ENCODE measurements at regions of chr13 and their contacts with region 1.

Region 1: DNA sequence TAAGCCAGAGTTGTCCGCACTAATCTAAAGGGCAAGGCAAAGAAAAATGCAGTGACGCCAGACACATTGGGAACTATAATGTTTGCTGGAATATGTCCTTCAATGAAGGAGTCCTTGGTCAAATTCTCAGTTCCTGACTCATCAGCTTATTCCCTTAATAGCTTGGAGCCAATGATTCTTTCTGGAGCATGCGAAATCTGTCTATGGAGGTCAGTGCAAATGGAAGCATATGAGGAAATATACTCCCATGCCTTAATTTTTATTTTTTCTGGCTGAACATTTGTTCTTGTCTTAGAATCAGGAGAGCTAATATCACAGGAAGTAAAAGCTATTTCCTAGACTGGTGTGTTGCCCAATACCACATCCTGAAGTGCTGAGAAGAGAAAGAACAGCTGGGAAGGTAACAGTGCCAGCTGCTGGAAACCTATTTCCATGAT is 289.8 kb upstream of the SPRY2 start:
- DNase-seq: peak; percentile 85
- H3K4me3 ChIP-seq: no peak overlapping the region
- H3K27ac ChIP-seq: peak overlapping the region; percentile 41
- H3K4me1 ChIP-seq: peaks cover 17% of the 10 kb centered on the region
- H3K27me3 ChIP-seq: no peaks in the 10 kb centered on the region
- CTCF ChIP-seq: no peak
- POLR2A ChIP-seq: no peak

Region 2: GRCh38 chr13:80436571-80437169 is 194.0 kb before region 1 on chr13:
- CTCF ChIA-PET with region 1: no interaction called
- POLR2A ChIA-PET with region 1: no interaction called
- dilution Hi-C with region 1: no loop called
- intact Hi-C with region 1: no loop called
- DNase-seq: no peak
- H3K4me3 ChIP-seq: no peak overlapping the region
- H3K27ac ChIP-seq: no peak overlapping the region
- H3K4me1 ChIP-seq: no peaks in the 10 kb centered on the region
- H3K27me3 ChIP-seq: no peaks in the 10 kb centered on the region
- CTCF ChIP-seq: no peak
- POLR2A ChIP-seq: no peak

Region 3: GRCh38 chr13:80469853-80470381 is 160.8 kb before region 1 on chr13:
- CTCF ChIA-PET with region 1: interaction called, 5 read pairs
- POLR2A ChIA-PET with region 1: no interaction called
- dilution Hi-C with region 1: no loop called
- intact Hi-C with region 1: loop called (anchors 5 kb)
- DNase-seq: peak; percentile 85
- H3K4me3 ChIP-seq: peak overlapping the region in 1 of 3 experiments; percentile 27
- H3K27ac ChIP-seq: peak overlapping the region; percentile 91
- H3K4me1 ChIP-seq: peaks cover 19% of the 10 kb centered on the region
- H3K27me3 ChIP-seq: no peaks in the 10 kb centered on the region
- CTCF ChIP-seq: no peak
- POLR2A ChIP-seq: no peak

Region 4: GRCh38 chr13:80551650-80552497 is 78.8 kb before region 1 on chr13:
- CTCF ChIA-PET with region 1: interaction called, 7 read pairs
- POLR2A ChIA-PET with region 1: no interaction called
- dilution Hi-C with region 1: no loop called
- intact Hi-C with region 1: loop called (anchors 1 kb)
- DNase-seq: peak; percentile 88
- H3K4me3 ChIP-seq: no peak overlapping the region
- H3K27ac ChIP-seq: no peak overlapping the region
- H3K4me1 ChIP-seq: peaks cover 46% of the 10 kb centered on the region
- H3K27me3 ChIP-seq: no peaks in the 10 kb centered on the region
- CTCF ChIP-seq: no peak
- POLR2A ChIP-seq: no peak

Region 5: DNA sequence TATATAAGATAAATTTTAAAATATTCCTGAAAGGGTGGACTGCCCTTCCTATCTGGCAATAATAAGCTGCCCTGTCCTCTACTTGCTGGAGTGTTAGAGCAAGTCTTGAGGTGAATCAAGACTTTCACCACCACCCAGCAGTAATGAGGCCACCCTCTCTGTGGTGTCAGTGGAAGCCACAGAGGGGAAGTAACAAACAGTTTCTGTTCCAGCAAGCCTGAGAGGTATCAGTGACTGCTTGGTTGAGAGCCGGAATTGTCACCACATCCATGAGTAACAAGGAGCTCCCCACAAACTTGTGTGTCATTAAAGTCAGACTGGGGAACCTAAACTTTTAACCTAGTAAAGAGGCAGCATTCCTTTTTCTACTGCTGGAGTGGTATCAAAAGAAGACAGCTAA is 242.9 kb after region 1 on chr13:
- CTCF ChIA-PET with region 1: interaction called, 3 read pairs
- POLR2A ChIA-PET with region 1: no interaction called
- dilution Hi-C with region 1: no loop called
- intact Hi-C with region 1: loop called (anchors 2 kb)
- DNase-seq: no peak
- H3K4me3 ChIP-seq: no peak overlapping the region
- H3K27ac ChIP-seq: no peak overlapping the region
- H3K4me1 ChIP-seq: peaks cover 9% of the 10 kb centered on the region
- H3K27me3 ChIP-seq: no peaks in the 10 kb centered on the region
- CTCF ChIP-seq: no peak
- POLR2A ChIP-seq: no peak

Measured in endothelial cell of umbilical vein (primary cell).